SK-N-SH (cell line): ENCODE measurements at regions of chr4 and their contacts with region 1.

Region 1: DNA sequence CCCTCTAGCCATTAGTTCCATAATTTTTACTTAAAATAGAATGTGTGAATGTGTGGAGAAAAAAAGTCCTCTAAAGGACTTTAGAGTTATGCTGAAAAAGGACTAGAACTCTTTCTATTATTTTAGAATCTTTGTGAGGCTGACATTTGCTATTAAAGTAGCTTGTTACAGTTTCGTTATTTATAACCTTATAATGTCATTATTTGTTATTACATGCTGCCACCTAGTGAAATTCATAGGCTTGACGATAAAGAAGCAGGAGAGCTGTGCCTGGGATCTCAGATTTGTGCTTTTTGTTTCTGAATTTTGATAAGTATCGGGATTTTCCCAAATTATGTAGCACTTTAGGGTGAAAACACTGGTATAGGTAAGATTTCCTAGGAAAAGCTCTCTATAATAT is 38.5 kb upstream of the TAPT1 start:
- DNase-seq: peak; percentile 49
- H3K4me3 ChIP-seq: no peak overlapping the region
- H3K27ac ChIP-seq: no peak overlapping the region
- H3K4me1 ChIP-seq: no peaks in the 10 kb centered on the region; a peak in 1 of 4 replicates
- H3K27me3 ChIP-seq: no peaks in the 10 kb centered on the region
- CTCF ChIP-seq: peak; percentile 73
- EP300 ChIP-seq: no peak
- RAD21 ChIP-seq: peak; percentile 71

Region 2: GRCh38 chr4:15963001-15963451 is 301.8 kb before region 1 on chr4 and contains the start of gene FGFBP2:
- CTCF ChIA-PET with region 1: interaction called, 25 read pairs
- POLR2A ChIA-PET with region 1: no interaction called
- DNase-seq: peak; percentile 75
- H3K4me3 ChIP-seq: no peak within 1 kb of the TSS; a peak in 1 of 4 replicates
- H3K27ac ChIP-seq: no peak within 1 kb of the TSS
- H3K4me1 ChIP-seq: peaks cover 0 to 9% of the 10 kb centered on the region in 2 experiments; a peak in 1 of 4 replicates
- H3K27me3 ChIP-seq: no peaks in the 10 kb centered on the region
- CTCF ChIP-seq: peak; percentile 62
- EP300 ChIP-seq: no peak
- RAD21 ChIP-seq: peak; percentile 79
- polyA plus RNA-seq, gene FGFBP2: 0.62 and 1.7 TPM in 2 replicates

Region 3: DNA sequence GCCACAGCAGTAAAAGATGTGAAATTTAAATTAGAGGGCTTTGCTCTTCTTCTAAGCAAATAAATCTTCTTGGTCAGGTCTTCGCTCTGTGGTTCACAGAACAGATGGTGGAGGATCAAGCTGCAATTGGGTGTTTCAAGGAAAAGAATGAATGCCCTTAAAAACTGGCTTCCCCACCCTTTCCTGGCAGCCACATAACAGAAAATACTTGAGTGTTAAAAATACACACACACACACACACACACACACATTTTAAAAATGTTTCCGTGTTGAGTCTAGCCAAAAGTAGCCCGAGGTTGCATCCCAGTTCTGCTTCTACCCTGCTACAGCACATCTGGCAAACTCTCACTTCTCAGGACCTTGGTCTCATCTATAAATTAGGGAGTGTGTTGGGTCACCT is 245.1 kb before region 1 on chr4:
- CTCF ChIA-PET with region 1: interaction called, 14 read pairs
- POLR2A ChIA-PET with region 1: no interaction called
- DNase-seq: no peak
- H3K4me3 ChIP-seq: no peak overlapping the region
- H3K27ac ChIP-seq: no peak overlapping the region
- H3K4me1 ChIP-seq: no peaks in the 10 kb centered on the region
- H3K27me3 ChIP-seq: no peaks in the 10 kb centered on the region; the same call in 1 of the 2 replicates
- CTCF ChIP-seq: no peak
- EP300 ChIP-seq: no peak
- RAD21 ChIP-seq: no peak

Region 4: DNA sequence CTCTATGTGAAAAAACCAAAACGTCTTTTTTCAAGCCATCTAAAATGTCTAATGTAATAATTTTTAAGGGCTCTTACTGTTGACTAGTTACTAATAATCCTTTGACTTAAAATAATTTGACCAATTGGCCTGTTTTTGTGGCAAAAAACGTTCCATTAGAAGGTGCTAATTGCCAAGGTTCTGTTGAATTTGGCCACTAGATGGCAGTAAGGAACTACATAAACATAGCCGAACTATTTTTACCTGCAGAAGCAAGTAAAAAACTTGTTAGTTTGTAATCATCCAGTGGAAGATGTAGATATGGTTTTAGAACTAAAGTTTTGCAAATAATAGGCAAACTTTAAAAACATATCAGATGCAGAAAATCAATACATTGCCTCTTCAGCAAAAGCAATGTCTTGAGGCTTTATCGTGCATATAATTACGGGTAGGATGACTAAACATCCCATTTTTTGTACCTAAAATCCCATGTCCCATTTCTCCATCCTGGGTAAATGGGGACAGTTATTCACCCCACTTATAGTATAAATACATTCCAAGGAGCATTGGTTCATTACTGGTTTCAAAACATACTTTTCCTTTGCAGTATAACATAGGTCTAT is 238.5 kb before region 1 on chr4:
- CTCF ChIA-PET with region 1: interaction called, 20 read pairs
- POLR2A ChIA-PET with region 1: no interaction called
- DNase-seq: peak; percentile 39
- H3K4me3 ChIP-seq: peak overlapping the region in 1 of 2 experiments; percentile 29; a peak in 1 of 4 replicates
- H3K27ac ChIP-seq: no peak overlapping the region
- H3K4me1 ChIP-seq: peaks cover 0 to 5% of the 10 kb centered on the region in 2 experiments; a peak in 1 of 4 replicates
- H3K27me3 ChIP-seq: no peaks in the 10 kb centered on the region; the same call in 1 of the 2 replicates
- CTCF ChIP-seq: peak; percentile 96
- EP300 ChIP-seq: no peak
- RAD21 ChIP-seq: peak; percentile 93

Region 5: GRCh38 chr4:16199093-16199492 is 65.7 kb before region 1 on chr4:
- CTCF ChIA-PET with region 1: interaction called, 11 read pairs
- POLR2A ChIA-PET with region 1: no interaction called
- DNase-seq: peak; percentile 34
- H3K4me3 ChIP-seq: no peak overlapping the region
- H3K27ac ChIP-seq: no peak overlapping the region
- H3K4me1 ChIP-seq: peaks cover 2 to 12% of the 10 kb centered on the region in 2 experiments
- H3K27me3 ChIP-seq: no peaks in the 10 kb centered on the region
- CTCF ChIP-seq: peak; percentile 63
- EP300 ChIP-seq: no peak
- RAD21 ChIP-seq: peak; percentile 75

Region 6: DNA sequence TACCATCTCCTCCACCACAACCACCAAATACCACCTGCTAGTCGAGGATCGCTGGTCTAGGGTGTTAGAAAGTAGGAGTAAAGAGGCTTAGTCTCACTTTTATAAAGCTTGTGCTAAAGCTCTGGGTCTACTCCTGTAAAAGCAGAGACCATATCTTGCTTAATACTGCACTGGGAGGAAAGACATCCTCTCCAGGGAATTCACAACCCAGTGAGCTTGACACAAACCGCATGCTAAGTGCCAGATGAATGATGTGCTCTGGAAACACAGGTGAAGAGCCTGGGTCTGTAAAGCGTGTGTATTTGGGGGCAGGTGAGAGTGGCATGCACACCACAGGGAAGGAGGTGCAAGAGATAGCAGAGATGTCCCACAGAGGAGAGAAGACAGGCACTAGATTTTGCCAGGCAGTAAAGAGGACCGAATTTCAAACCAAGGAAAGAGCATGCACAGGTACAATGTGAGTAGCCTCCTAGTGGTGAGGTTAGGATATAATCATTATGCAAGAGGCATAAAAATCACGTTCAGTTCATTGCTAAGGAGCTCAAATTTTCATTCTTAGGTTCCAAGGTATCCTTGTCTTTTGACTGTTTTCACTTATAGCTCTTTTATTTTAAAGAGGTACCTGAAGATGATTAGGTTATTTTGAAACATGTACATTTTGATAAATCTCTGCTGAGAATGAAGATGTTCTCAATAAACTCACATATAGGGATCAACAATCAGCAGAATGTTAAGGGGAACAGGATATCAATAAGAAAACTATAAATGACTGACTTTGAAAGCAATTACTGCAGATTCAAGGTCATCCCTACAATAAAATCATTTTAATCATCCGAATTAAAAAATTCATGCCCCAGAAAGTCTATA is 59.3 kb before region 1 on chr4:
- CTCF ChIA-PET with region 1: interaction called, 23 read pairs
- POLR2A ChIA-PET with region 1: no interaction called
- DNase-seq: peak; percentile 48
- H3K4me3 ChIP-seq: no peak overlapping the region
- H3K27ac ChIP-seq: no peak overlapping the region
- H3K4me1 ChIP-seq: no peaks in the 10 kb centered on the region; a peak in 2 of 4 replicates
- H3K27me3 ChIP-seq: no peaks in the 10 kb centered on the region
- CTCF ChIP-seq: peak; percentile 64
- EP300 ChIP-seq: no peak
- RAD21 ChIP-seq: peak; percentile 53

Region 7: GRCh38 chr4:16243285-16243684 is 21.5 kb before region 1 on chr4:
- CTCF ChIA-PET with region 1: interaction called, 12 read pairs
- POLR2A ChIA-PET with region 1: no interaction called
- DNase-seq: no peak
- H3K4me3 ChIP-seq: no peak overlapping the region
- H3K27ac ChIP-seq: no peak overlapping the region
- H3K4me1 ChIP-seq: no peaks in the 10 kb centered on the region
- H3K27me3 ChIP-seq: no peaks in the 10 kb centered on the region
- CTCF ChIP-seq: no peak
- EP300 ChIP-seq: no peak
- RAD21 ChIP-seq: no peak